Sciatic nerve (tissue), 2 donors: ENCODE measurements at regions of chr11 and their contacts with region 1.

Region 1: DNA sequence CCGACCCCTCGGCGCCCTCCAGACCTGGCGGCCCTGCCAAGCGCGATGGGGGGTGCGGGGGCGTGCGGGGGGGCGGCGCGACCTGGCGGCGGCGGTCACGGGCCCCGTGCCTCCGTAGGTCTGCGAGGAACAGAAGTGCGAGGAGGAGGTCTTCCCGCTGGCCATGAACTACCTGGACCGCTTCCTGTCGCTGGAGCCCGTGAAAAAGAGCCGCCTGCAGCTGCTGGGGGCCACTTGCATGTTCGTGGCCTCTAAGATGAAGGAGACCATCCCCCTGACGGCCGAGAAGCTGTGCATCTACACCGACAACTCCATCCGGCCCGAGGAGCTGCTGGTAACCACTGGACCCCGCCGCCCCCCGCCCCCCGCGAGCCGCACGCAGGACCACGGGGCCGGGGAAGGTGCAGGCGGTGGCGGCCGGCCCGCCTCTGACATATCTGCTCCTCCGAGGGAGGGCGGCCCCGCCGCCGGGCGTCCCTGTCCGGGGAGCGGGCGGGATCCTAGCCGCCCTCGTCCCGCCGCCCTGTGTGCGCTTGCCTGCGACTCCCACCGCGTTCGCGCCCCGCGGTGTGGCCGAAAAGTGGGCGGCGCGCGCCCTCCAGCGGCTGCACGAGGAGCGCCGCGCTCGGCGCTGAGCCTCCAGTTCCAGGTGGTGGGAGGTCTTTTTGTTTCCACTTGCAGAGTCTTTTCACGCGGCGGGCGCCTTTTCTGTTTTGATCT is 2.1 kb downstream of the CCND1 start:
- DNase-seq: peak; percentile 88
- ATAC-seq: peak; percentile 53

Region 2: DNA sequence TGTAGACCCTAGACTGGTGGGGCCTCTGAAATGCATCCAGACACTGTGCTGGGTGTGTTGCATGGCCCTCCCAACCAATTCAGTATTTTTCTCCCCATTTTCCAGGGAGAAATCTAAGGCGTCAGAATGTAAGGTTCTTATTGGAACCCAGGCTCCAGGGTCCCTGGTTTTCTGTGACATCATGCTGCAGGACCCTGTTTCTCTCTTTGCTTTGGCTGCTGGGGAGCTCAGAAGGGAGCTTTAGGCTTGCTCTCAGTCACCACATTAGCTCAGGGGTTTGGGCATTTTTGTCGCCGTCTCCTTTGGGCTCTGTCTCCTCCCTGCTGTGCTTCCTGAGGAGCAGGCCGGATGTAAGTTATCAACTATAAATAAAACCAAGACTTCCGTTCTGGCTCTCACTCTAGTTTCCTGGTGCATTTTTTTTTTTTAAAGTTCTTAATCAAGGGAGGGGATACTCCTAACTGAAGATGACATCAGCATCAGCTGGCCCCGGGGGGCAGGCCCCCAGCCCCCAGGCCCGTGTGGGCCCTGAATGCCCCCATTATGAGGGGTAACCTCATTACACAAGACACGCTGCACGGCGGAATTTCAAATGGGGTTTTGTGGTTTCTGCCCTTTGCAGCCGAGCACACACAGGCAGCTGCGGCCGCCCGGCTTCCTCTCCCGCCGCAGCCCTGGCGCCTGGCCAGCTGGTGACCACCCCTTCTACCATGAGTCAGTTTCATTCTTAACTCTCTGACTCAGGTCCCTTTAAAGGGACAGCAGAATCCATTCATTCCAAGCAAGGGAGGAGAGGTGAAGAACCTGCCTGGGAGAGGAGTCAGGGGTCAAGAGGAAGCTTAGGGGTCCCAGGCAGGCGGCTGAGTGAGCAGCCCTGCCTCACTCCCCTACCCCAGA is 345.9 kb before region 1 on chr11:
- intact Hi-C with region 1: loop called (anchors 10 kb)
- DNase-seq: peak; percentile 96
- ATAC-seq: peak; percentile 83

Region 3: DNA sequence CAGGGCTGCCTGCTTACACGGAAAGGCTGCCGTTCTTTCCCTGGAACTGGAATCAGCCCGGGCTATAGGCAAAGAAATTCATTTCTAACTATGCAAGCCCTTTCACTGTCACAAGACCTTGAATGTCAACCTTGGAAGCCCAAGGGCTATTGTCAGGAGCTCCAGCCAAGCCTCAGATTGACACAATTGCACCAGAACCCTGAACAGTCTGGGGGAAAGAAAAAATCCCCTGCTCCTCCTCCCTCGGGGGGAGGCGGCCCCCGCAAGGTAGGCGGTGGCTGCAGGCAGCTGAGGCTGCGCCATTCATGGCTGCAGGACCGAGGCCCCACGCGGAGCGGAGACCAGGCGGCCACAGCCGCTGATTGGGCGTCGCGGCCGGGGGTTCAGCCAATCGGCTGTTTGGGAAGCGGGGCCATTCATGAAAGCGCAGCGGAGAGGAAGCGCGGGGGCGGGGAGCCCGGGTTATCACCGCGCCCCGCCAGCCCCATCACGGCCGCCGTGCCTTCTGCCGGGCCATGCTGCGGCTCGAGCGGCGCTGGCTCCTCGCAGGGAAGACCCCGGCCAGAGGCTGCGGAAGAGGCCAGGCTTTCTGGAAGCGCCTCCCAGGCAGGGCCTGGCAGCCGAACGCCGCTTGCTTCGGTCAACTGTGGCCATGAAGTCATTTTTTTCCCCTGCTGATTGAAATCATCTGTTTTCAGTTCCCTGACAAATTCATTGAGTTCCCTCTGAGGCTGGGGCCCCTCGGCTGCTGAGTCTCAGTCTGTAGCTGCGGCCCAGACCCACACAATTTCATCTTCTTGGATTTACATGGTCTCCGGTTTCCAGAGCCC is 199.7 kb before region 1 on chr11:
- intact Hi-C with region 1: loop called (anchors 5 kb)
- DNase-seq: peak; percentile 95
- ATAC-seq: peak; percentile 89

Region 4: DNA sequence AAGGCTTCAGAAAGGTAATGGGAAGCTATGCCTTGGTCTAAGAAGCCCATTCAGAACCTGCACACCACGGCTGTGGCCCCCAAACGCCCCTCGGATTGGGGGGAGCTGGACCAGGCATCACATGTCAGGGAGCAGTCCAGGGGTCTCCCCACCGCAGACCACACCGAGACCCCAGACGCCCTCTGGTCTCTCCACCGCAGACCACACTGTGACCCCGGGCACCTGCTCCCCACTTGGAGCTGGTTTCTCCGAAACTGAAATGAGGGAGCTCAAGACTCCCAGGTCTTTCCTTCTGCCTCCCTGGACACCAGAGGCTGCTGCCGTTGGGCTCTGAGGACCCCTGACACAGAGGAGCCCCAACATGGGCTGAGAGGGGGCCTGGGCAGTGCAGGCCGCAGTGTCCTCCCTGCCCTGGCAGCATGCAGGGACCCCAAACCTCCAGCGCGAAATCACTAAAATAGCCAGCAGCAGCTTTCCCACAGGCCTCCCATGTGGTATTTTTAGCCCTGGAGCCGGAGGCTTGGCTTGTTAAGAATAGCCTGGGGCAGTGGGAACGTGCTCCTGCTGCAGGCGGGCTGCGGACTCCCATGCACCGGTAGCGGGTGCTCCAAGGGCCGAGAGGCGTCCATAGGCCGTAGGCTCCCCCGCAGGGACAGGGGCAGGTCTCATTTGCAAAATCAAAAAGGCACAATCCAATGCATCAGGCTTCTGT is 153.9 kb before region 1 on chr11:
- intact Hi-C with region 1: loop called (anchors 5 kb)
- DNase-seq: no peak
- ATAC-seq: peak; percentile 14

Region 5: GRCh38 chr11:69841859-69842698 is 199.0 kb after region 1 on chr11:
- intact Hi-C with region 1: no loop called
- DNase-seq: peak; percentile 30
- ATAC-seq: no peak